ENCODE measurements at regions of chr5 and their contacts with region 1.

Region 1: DNA sequence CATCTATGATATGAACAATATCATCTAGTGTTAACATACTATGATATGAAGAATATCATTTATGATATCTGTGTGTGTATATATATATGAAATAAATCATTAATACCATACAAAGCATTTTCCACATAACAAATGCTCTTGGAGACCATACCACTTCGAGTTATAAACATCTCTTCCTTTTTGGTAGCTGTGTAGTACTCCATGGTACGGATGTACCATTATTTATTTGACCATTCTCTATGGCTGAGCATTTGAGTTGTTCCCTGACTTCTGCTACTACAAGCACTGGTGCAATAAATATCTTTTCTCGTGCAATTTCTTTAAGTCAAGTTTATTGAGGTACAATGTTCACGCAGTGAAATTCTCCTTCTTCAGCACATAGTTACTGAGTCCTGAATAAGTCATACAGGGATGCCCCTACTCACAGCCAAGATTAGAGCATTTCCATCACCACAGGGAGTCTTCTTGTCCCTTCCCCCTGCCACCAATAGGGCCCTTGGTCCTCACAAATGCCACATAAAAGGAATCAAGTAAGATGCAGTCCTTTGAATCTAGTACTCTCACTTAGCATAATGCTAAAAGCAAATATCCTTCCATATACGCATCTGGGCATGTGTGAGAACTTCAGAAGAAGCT is 75.2 kb upstream of the SLC25A48 start:
- DNase-seq: no peak
- H3K4me3 Mint-ChIP-seq: no peak overlapping the region
- H3K27ac Mint-ChIP-seq: no peak overlapping the region
- H3K4me1 Mint-ChIP-seq: no peaks in the 10 kb centered on the region
- H3K27me3 Mint-ChIP-seq: no peaks in the 10 kb centered on the region

Region 2: DNA sequence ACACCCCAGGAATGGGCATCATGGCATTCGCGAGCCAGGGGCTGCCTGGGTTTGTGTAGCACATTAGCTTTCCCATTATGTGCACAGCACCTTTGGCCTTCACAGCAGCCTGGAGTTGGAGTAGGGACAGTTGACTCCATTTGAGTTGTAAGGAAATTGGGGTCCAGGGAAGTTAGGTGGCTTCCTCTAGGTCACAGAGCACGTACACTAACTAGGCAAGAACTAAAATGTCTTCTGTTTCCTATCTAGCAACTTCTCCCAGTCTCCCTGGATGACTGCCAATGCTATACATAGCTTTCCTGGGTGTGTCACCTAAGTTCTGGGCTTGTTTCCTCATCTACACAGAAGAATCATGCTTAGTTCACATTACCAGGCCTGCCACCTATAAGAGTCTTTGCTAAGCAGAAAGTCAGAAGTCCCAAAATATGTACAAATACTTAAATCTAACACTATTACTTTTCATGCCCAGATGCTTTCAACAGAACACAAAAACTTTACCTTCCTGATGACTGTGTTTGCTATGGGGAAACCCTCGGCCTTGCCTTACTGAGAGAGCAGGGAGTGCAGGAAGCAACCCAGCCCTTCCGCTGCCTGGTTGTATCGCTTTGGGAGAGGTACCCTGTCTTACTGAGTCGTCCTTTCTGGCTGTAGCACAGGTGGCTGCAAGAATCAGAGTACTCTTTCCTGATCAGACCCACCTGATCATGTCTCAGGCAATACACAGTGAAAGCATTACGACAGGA is 372.2 kb before region 1 on chr5:
- CTCF ChIA-PET with region 1: no interaction called
- POLR2A ChIA-PET with region 1: no interaction called
- intact Hi-C with region 1: no loop called
- DNase-seq: no peak
- H3K4me3 Mint-ChIP-seq: no peak overlapping the region
- H3K27ac Mint-ChIP-seq: no peak overlapping the region
- H3K4me1 Mint-ChIP-seq: peaks cover 40% of the 10 kb centered on the region
- H3K27me3 Mint-ChIP-seq: no peaks in the 10 kb centered on the region

Region 3: DNA sequence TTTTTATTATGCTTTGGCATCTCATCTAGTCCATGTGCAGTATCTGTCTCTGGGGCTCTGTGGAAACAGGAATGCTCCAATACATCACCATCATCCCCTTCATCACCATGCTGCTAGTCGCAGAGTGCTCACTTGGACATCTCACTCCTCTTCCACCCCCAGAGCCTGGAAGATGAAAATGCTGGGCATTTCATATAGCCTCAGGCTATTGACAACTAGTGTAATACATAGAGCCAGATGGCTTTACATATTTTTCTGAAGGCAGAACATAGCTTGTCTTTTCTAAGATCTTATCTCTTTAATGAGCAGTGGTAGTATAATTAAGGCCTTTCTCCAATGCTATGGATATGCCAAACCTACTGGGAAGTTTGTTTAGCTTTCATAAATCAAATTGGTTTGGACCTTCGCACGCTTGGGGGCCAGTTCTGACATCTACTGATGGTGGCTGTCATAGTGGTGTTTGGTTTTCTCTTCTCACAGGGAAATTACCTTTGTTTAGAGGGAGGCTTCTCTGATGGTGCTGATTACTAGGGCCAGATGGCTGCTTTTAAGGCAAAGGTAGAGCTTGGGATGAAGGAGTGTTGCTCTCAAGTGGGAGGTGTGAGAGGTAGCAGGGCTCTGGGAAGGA is 117.4 kb before region 1 on chr5:
- CTCF ChIA-PET with region 1: no interaction called
- POLR2A ChIA-PET with region 1: no interaction called
- intact Hi-C with region 1: no loop called
- DNase-seq: no peak
- H3K4me3 Mint-ChIP-seq: no peak overlapping the region
- H3K27ac Mint-ChIP-seq: no peak overlapping the region
- H3K4me1 Mint-ChIP-seq: no peaks in the 10 kb centered on the region
- H3K27me3 Mint-ChIP-seq: peaks cover 2% of the 10 kb centered on the region

Region 4: DNA sequence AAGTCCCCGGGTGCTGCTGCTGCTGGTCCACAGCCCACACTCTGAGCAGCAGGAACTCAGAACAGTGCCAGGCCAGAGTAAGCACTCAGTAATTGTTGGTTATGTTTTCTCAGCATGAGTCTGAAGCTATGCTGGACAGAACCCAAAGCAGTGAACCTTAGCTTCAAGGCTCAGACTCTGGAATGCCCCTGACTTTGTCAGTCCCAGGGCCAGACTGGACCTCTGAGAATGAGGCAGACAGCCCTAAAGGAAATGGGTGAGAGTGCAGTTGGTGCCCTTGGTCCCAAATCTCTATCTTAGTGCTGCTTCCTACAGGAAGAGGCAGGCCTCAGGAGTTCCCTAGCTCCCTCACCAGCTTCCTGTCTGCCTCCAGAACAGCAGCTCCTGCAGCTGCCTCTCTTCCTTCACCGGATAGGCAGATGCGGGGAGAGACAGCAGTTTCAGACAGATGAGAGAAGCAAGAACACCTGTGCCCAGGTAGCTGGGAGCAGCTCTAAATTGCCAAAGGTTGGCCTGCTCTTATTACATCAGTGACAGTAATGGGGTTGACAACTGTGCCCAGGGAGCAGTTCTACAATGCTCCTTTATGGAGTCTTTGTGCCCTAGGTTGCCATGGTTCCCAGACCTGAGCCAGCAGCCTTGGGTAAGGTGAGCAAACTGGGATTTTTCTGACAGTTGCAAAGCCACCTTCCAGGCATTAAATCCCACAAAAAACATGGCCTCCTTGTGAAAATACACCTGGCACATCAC is 98.3 kb before region 1 on chr5:
- CTCF ChIA-PET with region 1: no interaction called
- POLR2A ChIA-PET with region 1: no interaction called
- intact Hi-C with region 1: no loop called
- DNase-seq: no peak
- H3K4me3 Mint-ChIP-seq: no peak overlapping the region
- H3K27ac Mint-ChIP-seq: no peak overlapping the region
- H3K4me1 Mint-ChIP-seq: no peaks in the 10 kb centered on the region
- H3K27me3 Mint-ChIP-seq: peaks cover 12% of the 10 kb centered on the region

Region 5: DNA sequence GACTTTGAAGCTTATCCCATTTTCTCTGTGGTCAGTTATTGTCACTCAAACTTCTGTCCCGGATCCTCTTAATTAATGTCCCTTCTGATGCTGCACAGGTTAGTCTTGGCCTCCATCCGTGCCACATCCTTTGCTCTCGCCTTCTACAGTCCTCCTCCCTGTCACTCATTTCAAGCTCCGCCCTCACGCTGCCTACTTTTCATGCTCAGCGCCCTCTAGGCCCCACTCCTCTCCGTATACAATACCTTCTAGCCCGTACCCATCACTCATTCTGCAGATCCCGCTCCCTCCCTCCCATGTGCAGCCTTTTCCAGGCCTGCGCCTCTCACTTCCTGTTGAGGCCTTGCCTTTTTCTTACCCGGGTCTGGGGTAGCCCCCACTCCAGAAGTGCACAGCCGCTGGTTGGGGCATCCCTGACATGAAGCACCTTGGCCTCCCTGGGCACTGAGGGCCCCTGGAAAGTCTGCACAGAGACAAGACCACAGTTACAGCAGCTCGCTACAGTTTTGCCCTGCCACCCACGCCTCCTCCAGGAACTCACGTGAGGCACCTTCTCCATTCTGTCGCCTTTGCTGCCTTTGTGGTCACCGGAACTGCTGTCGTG is 13.3 kb before region 1 on chr5:
- CTCF ChIA-PET with region 1: no interaction called
- POLR2A ChIA-PET with region 1: no interaction called
- intact Hi-C with region 1: no loop called
- DNase-seq: no peak
- H3K4me3 Mint-ChIP-seq: no peak overlapping the region
- H3K27ac Mint-ChIP-seq: no peak overlapping the region
- H3K4me1 Mint-ChIP-seq: no peaks in the 10 kb centered on the region
- H3K27me3 Mint-ChIP-seq: peaks cover 2% of the 10 kb centered on the region

Region 6: DNA sequence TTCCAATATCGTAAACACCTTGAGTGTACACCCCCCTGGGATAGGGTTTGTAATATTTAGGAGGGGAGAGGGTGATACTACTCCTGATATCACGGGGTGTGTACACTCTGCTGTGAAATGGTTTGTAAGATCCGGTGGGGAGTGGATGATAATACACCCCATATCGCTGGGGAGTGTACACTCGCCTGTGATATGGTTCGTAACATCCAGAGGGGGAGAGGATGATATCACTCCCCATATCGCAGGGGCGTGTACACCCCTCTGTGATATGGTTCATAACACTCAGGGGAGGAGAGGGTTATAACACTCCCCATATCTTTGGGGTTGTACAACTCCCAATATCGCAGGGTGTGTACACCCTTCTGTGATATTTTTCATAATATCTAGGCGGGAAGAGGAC is 41.4 kb after region 1 on chr5:
- CTCF ChIA-PET with region 1: no interaction called
- POLR2A ChIA-PET with region 1: no interaction called
- intact Hi-C with region 1: loop called (anchors 5 kb)
- DNase-seq: no peak
- H3K4me3 Mint-ChIP-seq: no peak overlapping the region
- H3K27ac Mint-ChIP-seq: no peak overlapping the region
- H3K4me1 Mint-ChIP-seq: no peaks in the 10 kb centered on the region
- H3K27me3 Mint-ChIP-seq: peaks cover 3% of the 10 kb centered on the region

Measured in activated CD4-positive, alpha-beta memory T cell treated with anti-CD3 and anti-CD28 coated beads for 36 hours (primary cell).